ENCODE measurements at regions of chr12 and their contacts with region 1.

Region 1: DNA sequence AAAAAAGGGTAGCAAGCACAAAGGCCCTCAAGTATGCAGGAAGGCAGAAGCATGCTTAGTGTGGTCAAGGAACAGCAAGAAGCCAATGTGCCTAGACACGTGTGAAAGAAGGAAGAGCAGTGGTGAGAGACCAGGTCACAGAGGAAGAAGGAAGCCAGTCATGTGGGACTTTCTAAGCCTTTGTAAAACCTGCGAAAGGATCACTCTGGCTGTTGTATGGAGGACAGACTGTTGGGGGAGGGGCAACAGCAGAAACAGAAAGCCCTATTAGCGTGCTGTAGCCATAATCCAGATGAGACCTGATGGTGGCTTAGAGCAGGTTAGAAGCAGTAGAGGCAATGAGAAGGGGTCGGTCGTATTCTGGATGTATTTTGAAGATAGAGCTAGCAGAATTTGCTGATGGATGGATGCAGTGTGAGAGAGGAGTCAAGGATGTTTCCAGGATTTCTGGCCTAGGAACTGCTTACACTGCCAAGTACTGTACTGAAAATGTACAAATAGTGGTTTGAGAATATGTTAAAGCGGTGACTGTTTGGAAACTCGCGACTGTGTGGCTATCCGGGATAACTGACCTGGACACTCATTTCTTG is 5.7 kb upstream of the MLF2 start:
- DNase-seq: no peak
- H3K4me3 ChIP-seq: no peak overlapping the region
- H3K27ac ChIP-seq: no peak overlapping the region
- H3K4me1 ChIP-seq: peaks cover 0 to 9% (median 3%) of the 10 kb centered on the region in 4 experiments; a peak in 4 of 7 replicates
- H3K27me3 ChIP-seq: no peaks in the 10 kb centered on the region
- CTCF ChIP-seq: no peak
- EP300 ChIP-seq: no peak
- POLR2A ChIP-seq: no peak
- RAD21 ChIP-seq: no peak

Region 2: GRCh38 chr12:6771091-6771495 is 12.5 kb after region 1 on chr12:
- CTCF ChIA-PET with region 1: interaction called, 427 read pairs
- POLR2A ChIA-PET with region 1: interaction called, 151 read pairs
- DNase-seq: no peak
- H3K4me3 ChIP-seq: no peak overlapping the region
- H3K27ac ChIP-seq: no peak overlapping the region
- H3K4me1 ChIP-seq: peaks cover 4 to 36% (median 25%) of the 10 kb centered on the region in 4 experiments
- H3K27me3 ChIP-seq: peaks cover 0 to 27% (median 21%) of the 10 kb centered on the region in 4 experiments; a peak in 5 of 7 replicates
- CTCF ChIP-seq: no peak
- EP300 ChIP-seq: no peak
- POLR2A ChIP-seq: no peak
- RAD21 ChIP-seq: no peak

Region 3: GRCh38 chr12:6998708-6999451 is 240.3 kb after region 1 on chr12:
- CTCF ChIA-PET with region 1: no interaction called
- POLR2A ChIA-PET with region 1: no interaction called
- DNase-seq: no peak
- H3K4me3 ChIP-seq: no peak overlapping the region
- H3K27ac ChIP-seq: no peak overlapping the region
- H3K4me1 ChIP-seq: no peaks in the 10 kb centered on the region
- H3K27me3 ChIP-seq: no peaks in the 10 kb centered on the region
- CTCF ChIP-seq: no peak
- EP300 ChIP-seq: no peak
- POLR2A ChIP-seq: no peak
- RAD21 ChIP-seq: no peak